ENCODE measurements at regions of chr19 and their contacts with region 1.

Region 1: DNA sequence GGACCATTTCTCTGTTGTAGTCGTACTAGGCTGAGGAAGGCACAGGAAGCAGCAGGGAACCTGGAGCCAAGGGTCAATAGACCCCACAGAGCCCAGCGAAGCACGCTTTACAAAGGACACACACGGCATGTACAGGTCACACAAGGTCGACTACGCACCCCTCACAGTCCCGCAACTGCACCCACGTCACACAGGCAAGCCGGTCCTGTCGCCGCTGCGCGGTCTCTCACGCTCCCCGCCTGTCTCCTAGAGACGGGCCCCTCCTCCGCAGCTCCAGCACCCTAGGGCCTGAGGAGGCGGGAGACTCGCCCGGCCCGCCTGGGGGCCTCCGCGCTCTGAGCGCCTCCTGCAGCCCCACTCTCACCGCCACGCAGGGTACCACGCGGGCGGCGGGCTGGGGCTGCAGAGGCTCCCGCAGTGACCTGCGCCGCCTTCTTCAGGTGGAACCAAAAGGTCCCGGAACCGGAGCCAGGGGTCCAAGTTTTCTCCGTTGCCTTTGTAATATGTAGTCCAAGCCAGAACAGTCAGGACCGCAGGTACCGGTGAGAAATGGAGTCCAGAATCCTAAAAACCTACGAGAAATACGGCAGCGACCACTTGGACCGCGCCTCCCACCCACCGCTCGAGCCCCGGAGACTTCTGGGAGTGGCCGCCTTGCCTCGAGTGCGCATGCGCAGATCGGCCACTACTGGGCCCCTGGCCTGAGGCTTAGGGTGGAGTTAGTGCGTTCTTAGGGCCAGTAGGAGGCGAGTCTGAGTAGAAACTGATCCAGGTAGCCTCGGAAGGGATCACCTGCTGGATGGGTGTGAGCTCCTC is at the start of gene ZNF607:
- DNase-seq: peak; percentile 96 to 97
- H3K4me3 ChIP-seq: peak within 1 kb of the TSS; percentile 60
- H3K4me3 Mint-ChIP-seq: peak within 1 kb of the TSS; percentile 96
- H3K27ac Mint-ChIP-seq: peak within 1 kb of the TSS; percentile 91
- H3K4me1 ChIP-seq: 0 out of 2 replicates have a peak, but pooled peaks cover 3% of the 10 kb centered on the region
- H3K4me1 Mint-ChIP-seq: peaks cover 12% of the 10 kb centered on the region
- H3K27me3 ChIP-seq: no peaks in the 10 kb centered on the region
- H3K27me3 Mint-ChIP-seq: no peaks in the 10 kb centered on the region
- CTCF ChIP-seq: peak; percentile 80 to 84
- total RNA-seq, gene ZNF607: 14.5 and 15.4 TPM in 2 replicates

Region 2: GRCh38 chr19:37594304-37594981 is 124.9 kb before region 1 on chr19 and contains the starts of genes ZNF540 and ZNF571:
- CTCF ChIA-PET with region 1: interaction called, 3 read pairs
- POLR2A ChIA-PET with region 1: interaction called, 5 read pairs
- intact Hi-C with region 1: loop called (anchors 2 kb)
- DNase-seq: peak; percentile 93 to 95
- H3K4me3 ChIP-seq: peak within 1 kb of the TSS; percentile 73
- H3K4me3 Mint-ChIP-seq: peak within 1 kb of the TSS; percentile 95
- H3K27ac Mint-ChIP-seq: peak within 1 kb of the TSS; percentile 98
- H3K4me1 ChIP-seq: no peaks in the 10 kb centered on the region
- H3K4me1 Mint-ChIP-seq: peaks cover 15% of the 10 kb centered on the region
- H3K27me3 ChIP-seq: no peaks in the 10 kb centered on the region
- H3K27me3 Mint-ChIP-seq: no peaks in the 10 kb centered on the region
- CTCF ChIP-seq: no peak
- total RNA-seq, gene ZNF540: 0.36 TPM in 1 of 2 replicates, not detected in the other
- total RNA-seq, gene ZNF571: 1.4 and 3.6 TPM in 2 replicates

Region 3: GRCh38 chr19:37699127-37699526 is 20.2 kb before region 1 on chr19:
- CTCF ChIA-PET with region 1: no interaction called
- POLR2A ChIA-PET with region 1: no interaction called
- intact Hi-C with region 1: no loop called
- DNase-seq: peak in 1 of 2 experiments; percentile 8
- H3K4me3 ChIP-seq: no peak overlapping the region
- H3K4me3 Mint-ChIP-seq: no peak overlapping the region
- H3K27ac Mint-ChIP-seq: peak overlapping the region; percentile 8
- H3K4me1 ChIP-seq: peaks cover 12% of the 10 kb centered on the region
- H3K4me1 Mint-ChIP-seq: no peaks in the 10 kb centered on the region
- H3K27me3 ChIP-seq: no peaks in the 10 kb centered on the region
- H3K27me3 Mint-ChIP-seq: no peaks in the 10 kb centered on the region
- CTCF ChIP-seq: no peak

Measured in Caco-2 (cell line).